ENCODE measurements at regions of chr6 and their contacts with region 1.

Region 1: DNA sequence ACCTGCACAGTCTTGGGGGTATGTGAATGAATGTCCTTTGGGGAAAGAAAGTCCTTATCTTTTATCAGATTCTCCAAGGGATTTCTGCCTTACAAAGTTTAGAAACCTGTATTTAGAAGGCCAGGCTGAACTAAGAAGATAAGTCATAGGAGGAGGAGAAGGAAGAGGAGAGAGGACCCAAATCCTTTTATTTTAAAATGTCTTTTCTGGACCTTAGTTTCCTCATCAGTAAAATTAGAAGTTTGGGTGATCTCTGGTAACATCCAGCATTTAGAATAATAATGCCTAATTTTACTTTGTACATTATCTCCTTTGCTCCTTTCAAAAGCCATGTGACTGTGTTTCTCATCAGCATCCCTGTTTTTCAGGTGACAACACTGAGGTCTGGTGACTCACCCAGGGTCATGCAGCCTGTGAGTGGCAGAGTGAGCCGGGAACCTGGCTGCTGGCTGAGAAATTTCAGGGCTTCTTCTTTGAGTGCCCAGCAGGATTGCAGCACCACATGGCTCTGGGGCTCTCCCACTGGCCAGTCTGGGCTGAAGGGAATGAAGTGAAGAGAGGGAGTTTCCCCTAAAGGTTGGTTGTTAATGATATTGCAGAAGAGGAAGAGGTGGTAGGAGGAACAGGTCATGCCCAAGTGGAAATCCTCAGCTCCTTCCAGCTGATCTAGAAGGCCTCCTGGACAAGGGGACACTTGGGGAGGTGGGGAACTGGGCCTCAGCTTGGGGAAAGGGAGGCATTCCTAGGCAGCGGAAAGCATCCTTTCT is 34.0 kb downstream of the VEGFA start:
- DNase-seq: peak; percentile 56
- ATAC-seq: no peak
- H3K4me3 ChIP-seq: peak overlapping the region in 2 of 3 experiments; percentile 3 to 78; a peak in 3 of 6 replicates
- H3K27ac ChIP-seq: peak overlapping the region; percentile 79
- H3K4me1 ChIP-seq: peaks cover 95% of the 10 kb centered on the region
- H3K27me3 ChIP-seq: no peaks in the 10 kb centered on the region; a peak in 1 of 5 replicates
- CTCF ChIP-seq: no peak
- EP300 ChIP-seq: no peak
- POLR2A ChIP-seq: no peak
- RAD21 ChIP-seq: no peak

Region 2: GRCh38 chr6:43817192-43817591 is 13.2 kb after region 1 on chr6:
- CTCF ChIA-PET with region 1: no interaction called
- POLR2A ChIA-PET with region 1: interaction called, 20 read pairs
- in situ Hi-C with region 1: no loop called
- intact Hi-C with region 1: no loop called
- DNase-seq: peak; percentile 72
- ATAC-seq: peak; percentile 99
- H3K4me3 ChIP-seq: no peak overlapping the region
- H3K27ac ChIP-seq: no peak overlapping the region
- H3K4me1 ChIP-seq: peaks cover 46% of the 10 kb centered on the region
- H3K27me3 ChIP-seq: peaks cover 0 to 3% of the 10 kb centered on the region in 2 experiments; a peak in 2 of 5 replicates
- CTCF ChIP-seq: peak; percentile 92
- EP300 ChIP-seq: no peak
- POLR2A ChIP-seq: no peak
- RAD21 ChIP-seq: peak; percentile 86

Measured in HepG2 (cell line).